Activated CD4-positive, alpha-beta memory T cell treated with anti-CD3 and anti-CD28 coated beads, Interleukin-2, amount 10 ng/mL, durations not matched to agents 7 days and 5 days (primary cell): ENCODE measurements at regions of chr12 and their contacts with region 1.

Region 1: GRCh38 chr12:3933074-3933818 is 60.0 kb upstream of the PARP11 start:
- DNase-seq: no peak
- H3K4me3 Mint-ChIP-seq: peak overlapping the region; percentile 56
- H3K27ac Mint-ChIP-seq: peak overlapping the region; percentile 63
- H3K4me1 Mint-ChIP-seq: peaks cover 47% of the 10 kb centered on the region
- H3K27me3 Mint-ChIP-seq: no peaks in the 10 kb centered on the region

Region 2: GRCh38 chr12:3753544-3754284 is 179.5 kb before region 1 on chr12:
- CTCF ChIA-PET with region 1: no interaction called
- POLR2A ChIA-PET with region 1: no interaction called
- DNase-seq: peak; percentile 18
- H3K4me3 Mint-ChIP-seq: peak overlapping the region; percentile 89
- H3K27ac Mint-ChIP-seq: peak overlapping the region; percentile 97
- H3K4me1 Mint-ChIP-seq: peaks cover 50% of the 10 kb centered on the region
- H3K27me3 Mint-ChIP-seq: no peaks in the 10 kb centered on the region

Region 3: GRCh38 chr12:3820122-3820521 is 113.1 kb before region 1 on chr12:
- CTCF ChIA-PET with region 1: no interaction called
- POLR2A ChIA-PET with region 1: no interaction called
- DNase-seq: no peak
- H3K4me3 Mint-ChIP-seq: no peak overlapping the region
- H3K27ac Mint-ChIP-seq: no peak overlapping the region
- H3K4me1 Mint-ChIP-seq: no peaks in the 10 kb centered on the region
- H3K27me3 Mint-ChIP-seq: no peaks in the 10 kb centered on the region

Region 4: DNA sequence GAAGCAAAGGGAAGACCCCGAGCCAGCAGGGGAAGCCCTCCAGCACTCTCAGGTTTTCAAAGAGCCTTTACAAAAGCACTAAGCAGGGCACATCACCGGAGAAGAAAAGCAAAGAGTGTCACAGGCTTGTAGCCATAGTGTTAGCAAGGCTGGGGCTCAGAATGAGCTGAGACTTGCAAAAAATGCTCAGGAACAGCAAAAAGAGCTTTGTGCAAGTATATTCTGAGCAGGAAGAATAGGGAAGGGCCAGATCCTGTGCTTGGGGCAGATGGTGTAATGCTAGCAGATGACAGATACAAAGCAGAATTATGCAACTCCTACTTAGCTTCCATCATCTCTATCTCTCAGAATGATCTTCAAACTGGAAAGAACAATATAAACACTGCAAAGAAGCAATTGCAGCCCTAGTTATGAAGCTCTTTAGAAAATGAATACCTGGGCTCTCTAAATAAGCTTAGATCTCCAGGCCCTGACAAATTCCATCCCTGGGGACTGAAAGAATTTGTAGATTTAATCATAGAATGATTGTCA is 36.4 kb before region 1 on chr12:
- CTCF ChIA-PET with region 1: interaction called, 3 read pairs
- POLR2A ChIA-PET with region 1: interaction called, 13 read pairs
- DNase-seq: no peak
- H3K4me3 Mint-ChIP-seq: peak overlapping the region; percentile 51
- H3K27ac Mint-ChIP-seq: peak overlapping the region; percentile 97
- H3K4me1 Mint-ChIP-seq: peaks cover 37% of the 10 kb centered on the region
- H3K27me3 Mint-ChIP-seq: no peaks in the 10 kb centered on the region

Region 5: DNA sequence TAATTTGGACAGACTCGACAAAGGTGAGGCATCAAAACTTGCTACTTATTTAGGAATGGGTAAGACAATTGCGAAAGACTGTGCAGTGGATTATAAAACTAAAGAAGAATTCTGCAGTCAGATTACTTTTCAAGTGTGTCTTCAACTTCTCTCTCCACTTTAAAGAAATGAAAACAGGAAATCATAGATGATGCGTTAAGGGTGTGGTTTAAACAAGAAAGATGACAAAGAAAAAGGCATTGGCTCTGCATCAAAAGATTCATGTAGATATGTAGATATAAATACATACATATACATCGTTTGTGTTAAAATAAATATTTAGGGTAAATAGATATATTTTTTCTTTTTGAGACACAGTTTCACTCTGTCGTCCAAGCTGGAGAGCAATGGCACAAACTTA is 14.5 kb after region 1 on chr12:
- CTCF ChIA-PET with region 1: interaction called, 5 read pairs
- POLR2A ChIA-PET with region 1: interaction called, 10 read pairs
- DNase-seq: no peak
- H3K4me3 Mint-ChIP-seq: no peak overlapping the region
- H3K27ac Mint-ChIP-seq: peak overlapping the region; percentile 82
- H3K4me1 Mint-ChIP-seq: peaks cover 58% of the 10 kb centered on the region
- H3K27me3 Mint-ChIP-seq: peaks cover 9% of the 10 kb centered on the region

Region 6: DNA sequence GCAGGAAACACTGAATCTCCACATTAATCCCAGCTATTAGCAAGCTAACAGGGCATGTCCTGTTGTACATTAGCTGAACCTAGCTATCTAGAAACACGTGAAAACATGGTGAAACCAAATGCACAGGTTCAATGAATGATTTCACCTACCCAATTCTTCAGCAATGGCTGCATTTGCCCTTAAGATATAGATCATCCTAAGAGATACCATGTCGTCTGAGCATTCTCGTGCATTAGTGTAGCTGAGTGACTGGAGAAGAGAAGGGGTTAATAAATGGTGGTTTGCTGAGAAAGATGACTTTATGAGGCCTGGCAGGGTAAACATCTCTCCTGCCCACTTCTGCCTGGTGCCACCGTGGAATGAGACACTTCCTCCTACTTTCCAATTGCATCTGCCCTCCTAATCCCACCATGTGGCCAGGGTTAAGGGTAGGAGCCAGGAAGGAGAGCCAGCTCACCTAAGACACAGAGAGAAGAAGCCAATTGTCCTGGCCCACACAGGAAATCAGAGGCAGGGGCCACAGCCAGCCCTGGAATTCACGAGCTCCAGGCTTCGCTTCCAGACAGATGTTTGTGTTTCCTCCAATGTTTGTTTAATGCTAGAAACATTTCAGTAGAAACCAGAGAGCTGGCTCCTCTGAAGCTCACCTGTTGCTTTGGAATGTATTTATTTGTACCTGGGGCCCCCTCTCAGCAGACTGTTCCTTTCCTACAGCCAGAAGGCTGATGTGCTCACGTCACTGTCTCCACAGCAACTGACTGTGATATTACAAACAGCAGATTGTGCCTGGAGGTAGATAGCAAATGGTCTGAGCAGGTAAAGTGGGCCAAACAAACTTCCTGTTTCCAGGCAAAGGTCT is 66.0 kb after region 1 on chr12:
- CTCF ChIA-PET with region 1: no interaction called
- POLR2A ChIA-PET with region 1: no interaction called
- DNase-seq: no peak
- H3K4me3 Mint-ChIP-seq: no peak overlapping the region
- H3K27ac Mint-ChIP-seq: no peak overlapping the region
- H3K4me1 Mint-ChIP-seq: peaks cover 6% of the 10 kb centered on the region
- H3K27me3 Mint-ChIP-seq: peaks cover 6% of the 10 kb centered on the region